ENCODE measurements at regions of chr13 and their contacts with region 1.

Region 1: GRCh38 chr13:40963919-40964318 is 55.2 kb downstream of the ELF1 start:
- DNase-seq: no peak
- H3K4me3 Mint-ChIP-seq: no peak overlapping the region
- H3K27ac Mint-ChIP-seq: peak overlapping the region; percentile 60
- H3K4me1 Mint-ChIP-seq: peaks cover 81% of the 10 kb centered on the region
- H3K27me3 Mint-ChIP-seq: no peaks in the 10 kb centered on the region

Region 2: GRCh38 chr13:40149611-40150274 is 814.2 kb before region 1 on chr13:
- CTCF ChIA-PET with region 1: no interaction called
- intact Hi-C with region 1: no loop called
- DNase-seq: peak; percentile 37
- H3K4me3 Mint-ChIP-seq: no peak overlapping the region
- H3K27ac Mint-ChIP-seq: peak overlapping the region; percentile 52
- H3K4me1 Mint-ChIP-seq: peaks cover 73% of the 10 kb centered on the region
- H3K27me3 Mint-ChIP-seq: no peaks in the 10 kb centered on the region

Region 3: DNA sequence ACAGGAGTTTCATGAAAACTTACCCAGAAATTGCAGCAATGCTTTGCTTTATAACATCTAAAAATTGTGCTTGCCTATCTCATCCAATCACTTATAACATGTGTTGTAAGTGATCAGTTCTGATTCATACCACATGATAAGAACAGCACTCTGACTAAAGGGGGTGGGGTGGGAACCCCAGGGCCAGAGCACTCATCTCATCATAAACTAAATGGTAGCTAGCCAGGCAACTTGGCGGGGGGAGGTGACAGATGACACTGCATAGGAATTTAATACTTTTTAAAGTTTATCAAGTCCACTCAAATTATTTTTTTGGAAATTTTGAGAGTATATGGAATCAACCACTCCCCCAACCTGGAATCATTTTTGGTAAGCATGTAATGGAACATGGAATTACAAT is 339.5 kb before region 1 on chr13:
- CTCF ChIA-PET with region 1: no interaction called
- intact Hi-C with region 1: no loop called
- DNase-seq: peak; percentile 74
- H3K4me3 Mint-ChIP-seq: no peak overlapping the region
- H3K27ac Mint-ChIP-seq: peak overlapping the region; percentile 59
- H3K4me1 Mint-ChIP-seq: peaks cover 78% of the 10 kb centered on the region
- H3K27me3 Mint-ChIP-seq: no peaks in the 10 kb centered on the region

Region 4: DNA sequence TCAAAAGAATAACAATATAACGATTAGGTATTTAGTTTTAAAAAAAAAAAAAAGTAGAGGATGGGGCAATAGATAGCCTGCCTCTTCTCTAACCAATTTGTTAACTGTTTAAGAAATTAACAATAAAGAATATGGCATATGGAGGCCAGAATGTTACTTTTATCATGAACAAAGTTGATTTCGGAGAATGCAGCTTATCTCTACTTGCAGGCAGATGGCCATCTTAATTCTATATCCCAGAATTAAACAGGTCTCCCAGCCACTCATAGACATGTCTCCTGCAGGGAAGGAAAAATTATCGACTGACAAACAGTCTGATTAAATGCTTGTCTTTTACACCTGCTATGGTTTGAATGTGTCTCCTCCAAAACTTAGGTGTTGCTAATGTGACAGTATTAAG is 77.9 kb before region 1 on chr13:
- CTCF ChIA-PET with region 1: no interaction called
- intact Hi-C with region 1: no loop called
- DNase-seq: no peak
- H3K4me3 Mint-ChIP-seq: no peak overlapping the region
- H3K27ac Mint-ChIP-seq: no peak overlapping the region
- H3K4me1 Mint-ChIP-seq: peaks cover 21% of the 10 kb centered on the region
- H3K27me3 Mint-ChIP-seq: no peaks in the 10 kb centered on the region

Region 5: DNA sequence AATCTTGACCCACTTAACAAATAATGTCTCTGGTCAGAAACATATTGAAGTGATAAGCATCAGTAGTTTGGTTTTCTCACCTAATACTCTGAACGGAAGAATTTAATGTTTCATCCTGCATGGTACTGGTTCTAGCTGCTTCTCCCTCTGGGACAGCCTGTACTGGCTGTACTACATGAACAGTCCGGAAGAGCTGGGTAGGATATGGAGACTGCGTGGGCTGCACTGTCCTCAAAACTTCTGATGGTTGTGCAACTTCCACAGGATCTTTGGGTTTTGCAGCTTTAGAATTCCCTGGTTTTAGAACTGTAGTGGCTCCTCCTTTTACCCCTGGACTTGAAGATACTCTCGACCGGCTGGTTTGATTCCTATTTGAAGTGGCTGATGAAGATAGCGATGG is 23.1 kb before region 1 on chr13:
- CTCF ChIA-PET with region 1: no interaction called
- intact Hi-C with region 1: loop called (anchors 2 kb)
- DNase-seq: no peak
- H3K4me3 Mint-ChIP-seq: no peak overlapping the region
- H3K27ac Mint-ChIP-seq: no peak overlapping the region
- H3K4me1 Mint-ChIP-seq: peaks cover 24% of the 10 kb centered on the region
- H3K27me3 Mint-ChIP-seq: no peaks in the 10 kb centered on the region

Region 6: DNA sequence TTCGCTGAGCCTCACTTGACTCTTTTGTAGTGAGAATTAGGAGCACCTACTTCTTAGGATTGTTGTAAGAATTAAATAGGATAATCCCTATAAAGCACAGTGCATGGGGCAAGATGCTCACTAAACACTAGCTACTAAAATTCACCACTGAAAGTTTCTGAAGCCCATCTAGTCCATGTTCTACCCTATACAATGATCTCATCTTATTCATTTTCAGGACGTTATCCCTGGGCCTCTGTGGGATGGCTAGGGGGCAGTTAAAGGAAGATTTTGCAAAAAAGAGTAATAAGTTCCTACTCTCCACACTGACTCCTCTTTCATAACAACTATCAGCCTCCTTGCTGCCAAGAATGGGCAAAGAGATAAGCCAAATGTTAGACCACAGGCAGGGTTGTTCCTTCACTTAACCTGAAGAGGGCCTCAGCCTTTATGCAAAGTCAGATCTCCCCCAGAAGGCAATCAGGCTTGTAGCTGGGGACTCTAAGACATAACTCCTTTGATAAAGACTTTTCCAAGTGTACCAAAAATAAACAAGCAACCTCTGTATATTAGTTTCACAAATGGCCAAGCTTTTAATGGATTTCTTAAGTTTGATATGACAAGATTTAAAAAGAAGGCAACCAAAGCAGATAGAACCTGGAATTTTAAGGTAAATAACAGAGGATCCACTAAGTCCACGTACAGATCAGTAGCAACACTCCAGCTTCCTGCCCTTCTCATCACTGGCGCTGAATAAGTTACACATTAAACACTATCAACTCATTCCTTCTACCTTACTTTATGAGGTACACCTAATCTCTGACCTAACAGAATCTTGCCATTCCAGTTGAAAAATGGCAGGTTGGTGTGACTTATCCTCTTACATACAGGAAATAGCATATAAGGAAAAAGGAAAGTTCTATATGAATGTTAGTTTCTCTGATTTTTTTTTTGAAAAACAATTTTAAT is 10.8 kb after region 1 on chr13:
- CTCF ChIA-PET with region 1: interaction called, 5 read pairs
- intact Hi-C with region 1: loop called (anchors 1 kb)
- DNase-seq: peak; percentile 63
- H3K4me3 Mint-ChIP-seq: peak overlapping the region; percentile 36
- H3K27ac Mint-ChIP-seq: peak overlapping the region; percentile 94
- H3K4me1 Mint-ChIP-seq: peaks cover 83% of the 10 kb centered on the region
- H3K27me3 Mint-ChIP-seq: no peaks in the 10 kb centered on the region